ENCODE measurements at regions of chr14 and their contacts with region 1.

Region 1: DNA sequence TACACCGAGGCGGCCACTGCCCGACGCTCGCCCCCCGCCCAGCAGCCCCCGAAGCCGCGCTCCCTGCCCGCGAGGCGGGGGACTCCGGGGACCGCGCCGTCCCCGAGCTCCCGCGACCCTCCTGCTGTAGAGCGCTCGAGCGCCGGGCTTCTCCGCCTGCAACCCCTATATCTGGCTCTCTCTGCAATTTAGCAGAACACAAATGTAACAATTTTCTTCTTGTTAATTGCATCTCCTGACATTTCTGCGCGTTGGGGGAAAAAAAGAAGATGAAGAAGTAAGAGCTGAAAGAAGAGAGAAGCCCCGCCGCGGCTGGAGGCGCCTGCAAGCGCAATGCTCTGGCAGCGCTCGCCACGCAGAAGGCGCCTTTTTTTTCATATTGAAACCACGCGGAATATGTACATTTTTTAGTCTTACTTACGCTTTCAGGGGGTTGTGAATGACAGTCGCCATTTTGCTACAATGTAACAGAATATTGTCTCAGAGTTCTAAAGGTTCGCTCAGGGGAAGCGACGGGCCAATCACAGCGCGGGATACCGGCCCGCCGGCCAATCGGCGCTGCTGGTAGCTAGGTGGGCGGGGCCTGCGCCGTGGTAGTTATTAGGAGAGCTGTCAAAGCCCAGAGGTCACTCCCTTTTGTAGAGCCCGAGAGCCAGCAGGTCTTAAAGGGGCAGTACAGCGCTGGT is at the start of gene DPF3:
- H3K4me3 Mint-ChIP-seq: peak within 1 kb of the TSS; percentile 81
- H3K27ac Mint-ChIP-seq: peak within 1 kb of the TSS; percentile 42
- H3K4me1 Mint-ChIP-seq: peaks cover 35% of the 10 kb centered on the region
- H3K27me3 Mint-ChIP-seq: peaks cover 81% of the 10 kb centered on the region

Region 2: DNA sequence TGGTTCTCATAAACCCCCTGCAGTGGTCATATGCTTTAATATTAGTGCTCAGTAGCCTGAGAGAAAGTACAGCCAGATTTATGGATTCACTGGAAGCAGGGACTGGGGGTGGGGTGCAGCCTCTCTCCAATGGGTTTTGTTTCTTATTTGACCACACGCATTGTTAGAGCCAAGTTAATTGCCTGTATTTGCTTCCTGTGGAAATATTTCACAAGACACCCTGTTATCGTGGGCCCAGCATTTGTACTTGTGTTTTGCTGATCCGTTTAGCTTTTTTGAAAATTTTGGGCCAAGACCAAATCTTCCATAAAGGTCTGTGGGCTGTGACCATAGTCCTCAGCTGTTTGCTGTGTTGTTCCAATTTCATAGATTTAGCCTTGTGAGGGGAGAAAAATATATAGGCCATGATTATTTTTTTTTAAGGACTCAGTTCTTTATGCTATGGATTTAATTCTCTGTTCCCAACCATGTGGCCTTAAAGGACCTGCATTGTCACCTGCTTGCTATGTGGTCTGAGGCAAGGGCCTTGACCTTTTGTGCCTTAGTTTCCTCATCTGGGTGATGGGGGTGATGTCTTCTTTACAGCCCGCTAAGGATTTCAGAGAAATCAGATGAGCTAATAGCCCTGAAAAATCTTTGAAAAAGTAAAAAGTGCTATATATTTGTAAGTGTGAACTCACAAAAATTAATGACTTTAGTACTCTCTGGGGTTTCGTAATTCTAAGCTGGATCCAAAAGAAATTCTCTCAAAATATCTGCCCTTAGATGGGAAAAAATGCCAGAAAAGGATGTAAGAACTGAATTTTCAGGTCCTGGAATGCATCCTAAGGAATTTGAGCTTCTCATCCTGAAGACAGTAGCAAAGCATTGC is 370.1 kb before region 1 on chr14:
- intact Hi-C with region 1: no loop called
- H3K4me3 Mint-ChIP-seq: no peak overlapping the region
- H3K27ac Mint-ChIP-seq: no peak overlapping the region
- H3K4me1 Mint-ChIP-seq: peaks cover 75% of the 10 kb centered on the region
- H3K27me3 Mint-ChIP-seq: peaks cover 37% of the 10 kb centered on the region

Region 3: GRCh38 chr14:72926292-72927028 is 32.7 kb after region 1 on chr14 and contains the start of gene DCAF4:
- intact Hi-C with region 1: loop called (anchors 1 kb)
- H3K4me3 Mint-ChIP-seq: peak within 1 kb of the TSS; percentile 87
- H3K27ac Mint-ChIP-seq: peak within 1 kb of the TSS; percentile 75
- H3K4me1 Mint-ChIP-seq: peaks cover 17% of the 10 kb centered on the region
- H3K27me3 Mint-ChIP-seq: peaks cover 27% of the 10 kb centered on the region